Left colon (tissue), 2 donors: ENCODE measurements at regions of chr10 and their contacts with region 1.

Region 1: GRCh38 chr10:133329491-133330202 is 7.0 kb downstream of the CALY start:
- DNase-seq: peak; percentile 69 to 93
- ATAC-seq: peak; percentile 85

Region 2: GRCh38 chr10:133608855-133609254 is 279.2 kb after region 1 on chr10:
- intact Hi-C with region 1: loop called in 1 of 2 experiments (anchors 5 kb)
- DNase-seq: no peak
- ATAC-seq: no peak